A673 (cell line): ENCODE measurements at regions of chr19 and their contacts with region 1.

Region 1: GRCh38 chr19:28466107-28467045 is 746.6 kb downstream of the UQCRFS1 start:
- DNase-seq: peak; percentile 29
- H3K4me3 ChIP-seq: no peak overlapping the region
- H3K27ac ChIP-seq: no peak overlapping the region
- H3K4me1 ChIP-seq: no peaks in the 10 kb centered on the region
- H3K27me3 ChIP-seq: no peaks in the 10 kb centered on the region
- CTCF ChIP-seq: peak; percentile 72

Region 2: GRCh38 chr19:28504139-28504538 is 37.8 kb after region 1 on chr19:
- CTCF ChIA-PET with region 1: no interaction called
- POLR2A ChIA-PET with region 1: no interaction called
- intact Hi-C with region 1: no loop called
- DNase-seq: no peak
- H3K4me3 ChIP-seq: no peak overlapping the region
- H3K27ac ChIP-seq: no peak overlapping the region
- H3K4me1 ChIP-seq: no peaks in the 10 kb centered on the region
- H3K27me3 ChIP-seq: no peaks in the 10 kb centered on the region
- CTCF ChIP-seq: no peak

Region 3: DNA sequence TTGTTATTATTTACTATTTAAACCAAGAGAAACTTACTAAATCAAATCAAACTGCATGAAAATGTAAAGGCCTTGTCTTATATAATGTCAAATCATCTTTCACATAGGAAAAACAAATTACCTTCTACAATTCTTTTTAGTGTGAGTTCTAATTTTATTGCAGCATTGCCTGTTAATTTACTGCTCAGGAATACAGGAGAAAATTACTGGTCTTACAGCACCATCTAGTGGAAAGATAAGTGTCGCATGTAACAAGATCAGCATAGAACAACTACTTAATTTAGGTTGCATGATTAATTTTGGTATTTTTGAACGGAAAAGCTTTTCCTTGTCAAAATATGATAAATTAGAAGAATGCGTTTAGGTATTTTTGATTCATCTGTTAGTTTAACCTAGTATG is 243.9 kb after region 1 on chr19:
- CTCF ChIA-PET with region 1: no interaction called
- POLR2A ChIA-PET with region 1: no interaction called
- intact Hi-C with region 1: loop called (anchors 5 kb)
- DNase-seq: peak; percentile 65
- H3K4me3 ChIP-seq: no peak overlapping the region
- H3K27ac ChIP-seq: no peak overlapping the region
- H3K4me1 ChIP-seq: no peaks in the 10 kb centered on the region
- H3K27me3 ChIP-seq: no peaks in the 10 kb centered on the region
- CTCF ChIP-seq: peak; percentile 73